Heart right ventricle (tissue), 16 donors: ENCODE measurements at regions of chr5 and their contacts with region 1.

Region 1: GRCh38 chr5:58460732-58461286 is 923 bp upstream of the PLK2 start:
- DNase-seq: peak; percentile 90 to 93
- ATAC-seq: peak; percentile 82 to 93 (median 85)
- H3K4me3 ChIP-seq: peak overlapping the region; percentile 70 to 94 (median 88)
- H3K27ac ChIP-seq: peak overlapping the region; percentile 68 to 99 (median 98)
- H3K4me1 ChIP-seq: peaks cover 0 to 23% (median 12%) of the 10 kb centered on the region in 9 donors
- H3K27me3 ChIP-seq: peaks cover 0 to 20% (median 0%) of the 10 kb centered on the region in 7 donors
- CTCF ChIP-seq: peak; percentile 72 to 94 (median 82)

Region 2: DNA sequence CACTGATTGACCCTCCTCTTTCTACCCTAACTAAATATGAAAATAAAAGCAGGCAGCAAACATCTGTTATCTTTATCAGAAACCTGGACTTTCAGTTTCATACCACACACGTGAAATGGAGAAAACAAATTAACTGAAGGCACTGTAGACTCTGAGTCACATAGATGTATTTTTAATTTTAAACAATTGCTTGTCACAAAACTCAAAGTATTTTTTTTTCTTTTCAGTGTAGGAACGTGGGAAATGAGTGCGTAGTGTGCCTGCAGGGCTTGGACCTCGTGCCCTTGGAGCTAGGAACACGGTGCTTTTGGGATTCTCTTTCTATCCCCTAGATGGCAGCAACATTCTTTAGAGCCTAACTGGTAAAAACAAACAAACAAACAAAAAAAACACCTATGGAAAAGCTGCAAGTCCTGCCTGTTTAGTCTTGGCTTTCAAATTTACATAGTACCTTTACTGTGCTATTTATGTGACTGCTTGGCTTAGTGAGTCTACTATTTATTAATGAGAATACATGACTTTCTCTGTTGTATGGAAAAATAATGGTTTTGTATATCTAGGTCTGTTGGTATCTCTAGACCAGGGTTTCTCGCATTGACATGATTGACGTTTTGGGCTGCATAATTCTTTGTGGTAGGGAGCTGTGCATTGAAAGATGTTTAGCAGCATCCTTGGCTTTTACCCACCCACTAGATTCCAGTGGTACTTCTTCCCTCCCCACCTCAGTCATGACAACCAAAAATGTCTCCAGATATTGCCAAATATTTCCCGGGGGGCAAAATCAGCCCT is 961.4 kb before region 1 on chr5:
- intact Hi-C with region 1: loop called in 9 of 10 experiments (anchors 2 to 10 kb)
- DNase-seq: peak in 1 of 2 donors; percentile 31
- ATAC-seq: peak in 7 of 8 donors; percentile 50 to 82 (median 68)
- H3K4me3 ChIP-seq: peak overlapping the region in 7 of 10 donors; percentile 8 to 41 (median 31)
- H3K27ac ChIP-seq: peak overlapping the region in 4 of 10 donors; percentile 0 to 70 (median 33)
- H3K4me1 ChIP-seq: peaks cover 0 to 49% (median 33%) of the 10 kb centered on the region in 9 donors
- H3K27me3 ChIP-seq: no peaks in the 10 kb centered on the region
- CTCF ChIP-seq: peak; percentile 59 to 87 (median 76)

Region 3: GRCh38 chr5:57662991-57663390 is 797.8 kb before region 1 on chr5:
- intact Hi-C with region 1: loop called in 4 of 10 experiments (anchors 10 kb)
- DNase-seq: peak in 1 of 2 donors; percentile 45
- ATAC-seq: peak; percentile 80 to 95 (median 86)
- H3K4me3 ChIP-seq: no peak overlapping the region
- H3K27ac ChIP-seq: peak overlapping the region in 8 of 10 donors; percentile 24 to 89 (median 76)
- H3K4me1 ChIP-seq: peaks cover 0 to 30% (median 3%) of the 10 kb centered on the region in 9 donors
- H3K27me3 ChIP-seq: no peaks in the 10 kb centered on the region
- CTCF ChIP-seq: peak in 4 of 9 donors; percentile 5 to 40 (median 31)

Region 4: GRCh38 chr5:58019614-58020013 is 441.2 kb before region 1 on chr5:
- intact Hi-C with region 1: loop called in 1 of 10 experiments (anchors 10 kb)
- DNase-seq: peak; percentile 57 to 70
- ATAC-seq: peak; percentile 85 to 97 (median 92)
- H3K4me3 ChIP-seq: no peak overlapping the region
- H3K27ac ChIP-seq: peak overlapping the region in 8 of 10 donors; percentile 17 to 67 (median 56)
- H3K4me1 ChIP-seq: peaks cover 0 to 46% (median 28%) of the 10 kb centered on the region in 9 donors
- H3K27me3 ChIP-seq: no peaks in the 10 kb centered on the region
- CTCF ChIP-seq: no peak

Region 5: GRCh38 chr5:58188262-58188651 is 272.6 kb before region 1 on chr5:
- intact Hi-C with region 1: loop called in 3 of 10 experiments (anchors 5 to 10 kb)
- DNase-seq: no peak
- ATAC-seq: peak in 5 of 8 donors; percentile 34 to 73 (median 47)
- H3K4me3 ChIP-seq: no peak overlapping the region
- H3K27ac ChIP-seq: peak overlapping the region in 4 of 10 donors; percentile 3 to 33 (median 16)
- H3K4me1 ChIP-seq: peaks cover 0 to 27% (median 12%) of the 10 kb centered on the region in 9 donors
- H3K27me3 ChIP-seq: no peaks in the 10 kb centered on the region
- CTCF ChIP-seq: peak in 5 of 9 donors; percentile 7 to 35 (median 18)

Region 6: GRCh38 chr5:58259685-58260152 is 201.1 kb before region 1 on chr5:
- intact Hi-C with region 1: loop called in 1 of 10 experiments (anchors 5 kb)
- DNase-seq: no peak
- ATAC-seq: peak in 3 of 8 donors; percentile 37 to 51 (median 38)
- H3K4me3 ChIP-seq: peak overlapping the region in 5 of 10 donors; percentile 0 to 22 (median 20)
- H3K27ac ChIP-seq: peak overlapping the region in 4 of 10 donors; percentile 6 to 46 (median 30)
- H3K4me1 ChIP-seq: peaks cover 0 to 43% (median 22%) of the 10 kb centered on the region in 9 donors
- H3K27me3 ChIP-seq: no peaks in the 10 kb centered on the region
- CTCF ChIP-seq: no peak

Region 7: DNA sequence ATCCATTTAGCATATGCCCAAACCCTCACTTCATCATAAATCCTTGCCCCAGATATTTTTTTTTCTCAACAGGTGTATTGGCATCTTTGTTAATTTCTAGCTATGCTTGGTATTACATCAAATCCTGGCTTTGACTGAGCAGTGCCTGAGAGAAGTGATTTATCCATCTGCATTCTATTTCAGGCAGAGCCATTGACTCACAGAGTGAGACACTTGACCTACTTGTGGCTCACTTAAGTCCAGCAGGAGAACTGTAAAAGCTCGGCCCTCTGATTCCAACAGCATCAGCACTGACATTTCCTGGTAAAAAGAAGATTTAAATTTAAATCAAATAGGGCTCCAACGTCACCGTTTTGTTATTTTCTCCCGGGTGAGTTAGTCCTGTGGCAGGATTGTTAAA is 94.3 kb before region 1 on chr5:
- intact Hi-C with region 1: loop called in 2 of 10 experiments (anchors 10 kb)
- DNase-seq: peak in 1 of 2 donors; percentile 10
- ATAC-seq: peak; percentile 47 to 98 (median 87)
- H3K4me3 ChIP-seq: no peak overlapping the region
- H3K27ac ChIP-seq: peak overlapping the region in 7 of 10 donors; percentile 34 to 75 (median 53)
- H3K4me1 ChIP-seq: peaks cover 0 to 16% (median 0%) of the 10 kb centered on the region in 9 donors
- H3K27me3 ChIP-seq: no peaks in the 10 kb centered on the region
- CTCF ChIP-seq: no peak